ENCODE measurements at regions of chr11 and their contacts with region 1.

Region 1: GRCh38 chr11:85627998-85628770 is at the start of gene TMEM126B:
- DNase-seq: peak; percentile 99
- ATAC-seq: peak; percentile 95
- H3K4me3 Mint-ChIP-seq: peak within 1 kb of the TSS; percentile 98
- H3K27ac Mint-ChIP-seq: peak within 1 kb of the TSS; percentile 100
- H3K4me1 Mint-ChIP-seq: peaks cover 35% of the 10 kb centered on the region
- H3K27me3 Mint-ChIP-seq: no peaks in the 10 kb centered on the region
- total RNA-seq, gene TMEM126B: 62.7 to 74.2 TPM

Region 2: DNA sequence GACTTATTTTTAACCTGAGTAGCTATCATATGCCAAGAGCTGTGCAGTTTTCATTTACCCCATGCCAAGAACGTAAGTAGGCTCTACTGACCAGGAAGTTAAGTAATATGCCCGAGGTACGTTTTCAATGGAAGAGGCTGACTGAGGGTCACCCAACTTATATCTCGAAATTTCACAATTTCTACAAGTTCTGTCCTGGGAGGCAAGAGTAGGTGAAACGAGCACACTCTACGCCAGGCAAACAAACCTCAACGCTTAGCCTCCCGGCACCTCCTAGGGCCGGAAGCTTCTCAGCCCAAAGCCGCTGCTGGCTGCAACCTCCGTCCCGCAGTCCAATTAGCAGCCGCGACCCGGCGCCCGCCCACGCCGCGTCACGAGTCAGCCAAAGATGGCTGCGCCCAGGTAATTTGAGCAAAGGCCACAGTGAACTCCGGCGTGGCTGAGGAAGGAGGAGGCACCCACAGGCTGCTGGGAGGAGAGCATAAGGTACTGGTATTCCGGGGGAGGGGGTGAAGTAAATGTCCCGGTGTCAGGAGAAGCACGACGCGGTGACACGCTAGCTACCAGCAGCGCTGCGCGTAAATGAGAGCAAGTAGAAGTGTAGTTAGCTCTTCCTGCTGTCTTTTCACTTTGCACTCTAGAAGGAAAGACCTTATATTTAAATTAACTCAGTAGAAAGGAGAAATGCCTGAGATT is 19.6 kb after region 1 on chr11 and contains the start of gene TMEM126A:
- CTCF ChIA-PET with region 1: interaction called, 4 read pairs
- POLR2A ChIA-PET with region 1: interaction called, 16 read pairs
- intact Hi-C with region 1: loop called (anchors 1 kb)
- DNase-seq: peak; percentile 96
- ATAC-seq: peak; percentile 97
- H3K4me3 Mint-ChIP-seq: peak within 1 kb of the TSS; percentile 99
- H3K27ac Mint-ChIP-seq: peak within 1 kb of the TSS; percentile 96
- H3K4me1 Mint-ChIP-seq: peaks cover 22% of the 10 kb centered on the region
- H3K27me3 Mint-ChIP-seq: peaks cover 12% of the 10 kb centered on the region
- total RNA-seq, gene TMEM126A: 21.7 to 37.4 TPM

Region 3: GRCh38 chr11:85826116-85826855 is 198.1 kb after region 1 on chr11:
- CTCF ChIA-PET with region 1: interaction called, 3 read pairs
- POLR2A ChIA-PET with region 1: no interaction called
- intact Hi-C with region 1: loop called in 1 of 2 experiments (anchors 2 kb)
- DNase-seq: peak; percentile 48
- ATAC-seq: no peak
- H3K4me3 Mint-ChIP-seq: no peak overlapping the region
- H3K27ac Mint-ChIP-seq: peak overlapping the region; percentile 11
- H3K4me1 Mint-ChIP-seq: peaks cover 65% of the 10 kb centered on the region
- H3K27me3 Mint-ChIP-seq: no peaks in the 10 kb centered on the region

Region 4: DNA sequence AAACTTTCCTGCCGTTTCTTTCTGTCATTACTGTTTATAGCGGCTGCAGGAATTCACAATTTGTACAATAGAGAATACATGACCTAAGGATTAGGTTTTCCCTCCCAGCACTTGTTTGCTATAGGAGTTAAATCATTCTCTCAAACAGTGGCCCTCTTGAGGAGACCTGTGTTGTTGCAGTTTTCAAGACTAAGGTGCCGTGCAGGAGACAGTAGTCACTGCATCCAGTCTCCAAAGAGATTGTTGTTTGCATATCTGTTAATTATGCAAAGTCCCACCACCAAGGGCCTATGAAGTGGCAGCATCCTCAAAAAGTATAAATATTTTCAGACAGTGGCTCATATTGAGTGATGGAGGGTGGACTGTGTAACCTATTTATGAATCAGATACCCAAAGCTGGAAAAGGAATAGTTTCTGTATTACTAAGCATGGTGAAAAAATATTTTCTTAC is 1174.4 kb after region 1 on chr11:
- CTCF ChIA-PET with region 1: no interaction called
- POLR2A ChIA-PET with region 1: no interaction called
- intact Hi-C with region 1: loop called in 1 of 2 experiments (anchors 10 kb)
- DNase-seq: peak; percentile 39
- ATAC-seq: peak; percentile 34
- H3K4me3 Mint-ChIP-seq: no peak overlapping the region
- H3K27ac Mint-ChIP-seq: no peak overlapping the region
- H3K4me1 Mint-ChIP-seq: peaks cover 62% of the 10 kb centered on the region
- H3K27me3 Mint-ChIP-seq: peaks cover 55% of the 10 kb centered on the region